Stomach (tissue), 19 donors: ENCODE measurements at regions of chr17 and their contacts with region 1.

Region 1: GRCh38 chr17:78497115-78497540 is 80.1 kb downstream of the DNAH17 start:
- DNase-seq: peak; percentile 70 to 91
- H3K4me3 ChIP-seq: no peak overlapping the region
- H3K27ac ChIP-seq: no peak overlapping the region
- H3K4me1 ChIP-seq: no peaks in the 10 kb centered on the region
- H3K27me3 ChIP-seq: peaks cover 0 to 16% (median 0%) of the 10 kb centered on the region in 3 donors
- CTCF ChIP-seq: peak in 5 of 7 experiments; percentile 46 to 77 (median 63)
- EP300 ChIP-seq: no peak
- POLR2A ChIP-seq: no peak

Region 2: DNA sequence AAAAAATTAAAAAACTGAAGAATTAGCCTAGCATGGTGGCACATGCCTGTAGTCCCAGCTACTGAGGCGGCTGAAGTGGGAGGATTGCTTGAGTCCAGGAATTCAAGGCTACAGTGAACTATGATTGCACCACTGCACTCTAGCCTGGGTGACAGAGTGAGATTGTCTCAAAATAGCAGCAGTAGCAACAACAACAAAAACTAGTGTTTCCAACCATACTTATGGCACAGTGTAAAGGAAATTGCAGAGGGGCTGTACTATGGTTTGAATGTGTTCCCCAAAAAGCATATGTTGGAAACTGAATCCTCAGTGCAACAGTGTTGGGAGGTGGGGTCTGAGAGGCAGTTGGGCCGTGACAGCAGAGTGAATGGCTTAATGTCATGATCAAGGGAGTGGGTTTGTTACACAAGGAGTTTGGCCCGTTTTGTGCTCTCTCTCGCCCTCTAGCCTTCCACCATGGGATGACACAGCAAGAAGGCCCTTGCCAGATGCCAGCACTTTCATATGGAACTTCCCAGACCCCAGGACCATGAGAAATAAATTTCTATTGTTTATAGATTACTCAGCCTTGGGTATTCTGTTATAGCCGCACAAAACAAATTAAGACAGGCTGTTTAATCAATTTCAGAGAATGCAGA is 48.7 kb before region 1 on chr17:
- intact Hi-C with region 1: no loop called
- DNase-seq: no peak
- H3K4me3 ChIP-seq: no peak overlapping the region
- H3K27ac ChIP-seq: no peak overlapping the region
- H3K4me1 ChIP-seq: no peaks in the 10 kb centered on the region
- H3K27me3 ChIP-seq: peaks cover 0 to 4% (median 0%) of the 10 kb centered on the region in 3 donors
- CTCF ChIP-seq: no peak
- EP300 ChIP-seq: no peak
- POLR2A ChIP-seq: no peak

Region 3: DNA sequence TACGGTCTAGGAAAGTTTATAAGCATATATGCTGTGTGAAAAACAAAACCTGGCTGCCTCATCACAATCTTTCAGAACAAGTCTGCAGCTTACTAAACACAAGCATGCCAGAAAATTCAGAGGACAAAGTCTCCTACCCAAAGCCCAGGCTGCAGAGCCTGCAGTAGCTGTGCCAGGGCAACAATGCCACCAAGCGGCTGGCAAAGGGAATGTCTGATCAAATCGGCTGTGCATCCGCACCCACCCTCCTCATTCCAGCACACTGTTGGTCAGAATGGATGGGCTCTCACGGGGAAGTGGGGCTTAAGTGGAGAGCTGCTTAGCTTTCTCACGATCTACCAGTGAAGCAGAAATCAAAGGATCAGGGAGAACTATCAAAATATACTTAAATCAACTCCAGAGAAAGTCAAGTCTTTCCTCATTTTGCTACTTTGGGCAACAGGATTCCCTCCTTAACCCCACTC is 211.4 kb after region 1 on chr17:
- intact Hi-C with region 1: loop called (anchors 10 kb)
- DNase-seq: peak; percentile 72 to 92
- H3K4me3 ChIP-seq: no peak overlapping the region
- H3K27ac ChIP-seq: peak overlapping the region in 1 of 5 donors; percentile 42
- H3K4me1 ChIP-seq: peaks cover 8 to 57% (median 38%) of the 10 kb centered on the region in 4 donors
- H3K27me3 ChIP-seq: no peaks in the 10 kb centered on the region
- CTCF ChIP-seq: peak in 5 of 7 experiments; percentile 61 to 73 (median 68)
- EP300 ChIP-seq: no peak
- POLR2A ChIP-seq: no peak

Region 4: GRCh38 chr17:78798695-78799559 is 301.8 kb after region 1 on chr17:
- intact Hi-C with region 1: loop called (anchors 10 kb)
- DNase-seq: peak in 1 of 2 donors; percentile 60
- H3K4me3 ChIP-seq: no peak overlapping the region
- H3K27ac ChIP-seq: peak overlapping the region in 1 of 5 donors; percentile 27
- H3K4me1 ChIP-seq: peaks cover 5 to 49% (median 29%) of the 10 kb centered on the region in 4 donors
- H3K27me3 ChIP-seq: no peaks in the 10 kb centered on the region
- CTCF ChIP-seq: peak in 5 of 7 experiments; percentile 32 to 47 (median 42)
- EP300 ChIP-seq: no peak
- POLR2A ChIP-seq: no peak